ENCODE measurements at regions of chr14 and their contacts with region 1.

Region 1: GRCh38 chr14:61444215-61444768 is 122.9 kb downstream of the PRKCH start:
- DNase-seq: peak; percentile 64 to 85
- ATAC-seq: peak; percentile 87 to 92 (median 87)
- H3K4me3 ChIP-seq: no peak overlapping the region
- H3K4me3 Mint-ChIP-seq: peak overlapping the region; percentile 82
- H3K27ac ChIP-seq: peak overlapping the region; percentile 70
- H3K27ac Mint-ChIP-seq: no peak overlapping the region
- H3K4me1 ChIP-seq: peaks cover 65% of the 10 kb centered on the region
- H3K4me1 Mint-ChIP-seq: peaks cover 94 to 96% of the 10 kb centered on the region in 2 donors
- H3K27me3 ChIP-seq: no peaks in the 10 kb centered on the region
- H3K27me3 Mint-ChIP-seq: no peaks in the 10 kb centered on the region
- CTCF ChIP-seq: no peak

Region 2: GRCh38 chr14:60356906-60357550 is 1087.3 kb before region 1 on chr14:
- intact Hi-C with region 1: no loop called
- DNase-seq: no peak
- ATAC-seq: no peak
- H3K4me3 ChIP-seq: no peak overlapping the region
- H3K4me3 Mint-ChIP-seq: no peak overlapping the region
- H3K27ac ChIP-seq: no peak overlapping the region
- H3K27ac Mint-ChIP-seq: no peak overlapping the region
- H3K4me1 ChIP-seq: no peaks in the 10 kb centered on the region
- H3K4me1 Mint-ChIP-seq: no peaks in the 10 kb centered on the region
- H3K27me3 ChIP-seq: no peaks in the 10 kb centered on the region
- H3K27me3 Mint-ChIP-seq: peaks cover 9 to 12% of the 10 kb centered on the region in 2 donors
- CTCF ChIP-seq: no peak

Region 3: GRCh38 chr14:61326847-61327246 is 117.4 kb before region 1 on chr14:
- intact Hi-C with region 1: loop called (anchors 5 kb)
- DNase-seq: peak in 1 of 2 donors; percentile 51
- ATAC-seq: no peak
- H3K4me3 ChIP-seq: peak overlapping the region; percentile 26
- H3K4me3 Mint-ChIP-seq: peak overlapping the region; percentile 95
- H3K27ac ChIP-seq: peak overlapping the region; percentile 83
- H3K27ac Mint-ChIP-seq: peak overlapping the region in 1 of 2 donors; percentile 99
- H3K4me1 ChIP-seq: peaks cover 48% of the 10 kb centered on the region
- H3K4me1 Mint-ChIP-seq: peaks cover 80 to 84% of the 10 kb centered on the region in 2 donors
- H3K27me3 ChIP-seq: no peaks in the 10 kb centered on the region
- H3K27me3 Mint-ChIP-seq: no peaks in the 10 kb centered on the region
- CTCF ChIP-seq: no peak

Region 4: GRCh38 chr14:61761959-61762786 is 317.9 kb after region 1 on chr14 and contains the start of gene SNAPC1:
- intact Hi-C with region 1: no loop called
- DNase-seq: peak; percentile 95 to 100
- ATAC-seq: peak; percentile 93 to 99 (median 96)
- H3K4me3 ChIP-seq: peak within 1 kb of the TSS; percentile 95
- H3K4me3 Mint-ChIP-seq: peak within 1 kb of the TSS; percentile 97
- H3K27ac ChIP-seq: peak within 1 kb of the TSS; percentile 96
- H3K27ac Mint-ChIP-seq: peak within 1 kb of the TSS; percentile 96 to 97
- H3K4me1 ChIP-seq: peaks cover 18% of the 10 kb centered on the region
- H3K4me1 Mint-ChIP-seq: peaks cover 25 to 37% of the 10 kb centered on the region in 2 donors
- H3K27me3 ChIP-seq: no peaks in the 10 kb centered on the region
- H3K27me3 Mint-ChIP-seq: peaks cover 9 to 10% of the 10 kb centered on the region in 2 donors
- CTCF ChIP-seq: no peak
- total RNA-seq, gene SNAPC1: 2.2 to 2.4 (median 2.2) TPM

Measured in natural killer cell (primary cell).